Right ventricle myocardium inferior (tissue), 1 donor: ENCODE measurements at regions of chr11 and their contacts with region 1.

Region 1: GRCh38 chr11:47355283-47356128 is 3.0 kb upstream of the MYBPC3 start:
- DNase-seq: peak; percentile 95
- ATAC-seq: peak; percentile 58

Region 2: GRCh38 chr11:46889689-46890475 is 465.6 kb before region 1 on chr11:
- intact Hi-C with region 1: loop called (anchors 5 kb)
- DNase-seq: no peak
- ATAC-seq: peak; percentile 83

Region 3: DNA sequence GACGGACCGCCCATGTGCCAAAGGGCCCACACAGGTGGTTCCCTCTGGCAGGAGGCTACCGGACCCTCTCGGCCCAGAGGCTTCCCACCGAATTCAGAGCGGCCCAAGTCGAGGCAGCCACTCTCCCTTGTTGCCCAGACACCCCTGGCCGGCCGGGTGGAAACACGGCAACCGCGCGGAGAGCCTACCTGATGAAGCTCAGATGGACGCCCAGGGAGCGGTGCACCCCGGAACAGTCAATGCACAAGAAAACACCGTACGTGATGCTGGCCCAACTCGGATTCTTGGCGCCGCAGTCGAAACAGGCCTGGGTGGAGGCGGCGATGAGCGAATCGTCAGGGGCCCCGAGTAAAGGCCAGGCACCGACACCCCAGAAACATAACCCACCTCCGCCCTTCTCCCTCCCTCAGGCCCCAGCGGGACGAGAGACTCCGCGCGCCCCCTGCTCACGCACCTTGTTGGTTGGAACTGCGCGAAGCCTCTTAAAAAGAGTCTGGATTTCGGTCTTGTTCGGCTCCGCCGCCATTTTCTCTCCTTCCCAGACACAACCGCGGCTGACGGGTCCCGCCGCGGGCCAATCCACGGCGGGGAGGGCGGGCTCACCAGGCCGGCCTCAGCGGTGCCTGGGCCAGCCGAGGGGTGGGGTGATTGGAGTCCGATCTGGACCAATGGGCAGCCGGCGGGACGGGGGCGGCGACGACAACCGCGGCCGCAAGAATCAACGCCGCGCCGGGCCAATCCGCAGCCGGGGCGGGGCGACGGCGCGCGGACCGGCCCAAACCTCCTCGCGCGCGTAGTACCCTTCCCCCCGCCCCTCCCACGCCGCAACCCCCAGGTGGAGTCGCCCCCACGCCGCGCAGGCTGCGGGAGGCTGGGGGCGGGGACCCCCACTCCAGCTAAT is 178.9 kb before region 1 on chr11 and contains the start of gene ARFGAP2:
- intact Hi-C with region 1: loop called (anchors 1 kb)
- DNase-seq: peak; percentile 99
- ATAC-seq: peak; percentile 94
- total RNA-seq, gene ARFGAP2: 45.8 TPM

Region 4: GRCh38 chr11:47259178-47259977 is 96.1 kb before region 1 on chr11:
- intact Hi-C with region 1: loop called (anchors 1 kb)
- DNase-seq: no peak
- ATAC-seq: no peak

Region 5: GRCh38 chr11:47269002-47269828 is 86.3 kb before region 1 on chr11:
- intact Hi-C with region 1: loop called (anchors 1 kb)
- DNase-seq: peak; percentile 95
- ATAC-seq: peak; percentile 91

Region 6: DNA sequence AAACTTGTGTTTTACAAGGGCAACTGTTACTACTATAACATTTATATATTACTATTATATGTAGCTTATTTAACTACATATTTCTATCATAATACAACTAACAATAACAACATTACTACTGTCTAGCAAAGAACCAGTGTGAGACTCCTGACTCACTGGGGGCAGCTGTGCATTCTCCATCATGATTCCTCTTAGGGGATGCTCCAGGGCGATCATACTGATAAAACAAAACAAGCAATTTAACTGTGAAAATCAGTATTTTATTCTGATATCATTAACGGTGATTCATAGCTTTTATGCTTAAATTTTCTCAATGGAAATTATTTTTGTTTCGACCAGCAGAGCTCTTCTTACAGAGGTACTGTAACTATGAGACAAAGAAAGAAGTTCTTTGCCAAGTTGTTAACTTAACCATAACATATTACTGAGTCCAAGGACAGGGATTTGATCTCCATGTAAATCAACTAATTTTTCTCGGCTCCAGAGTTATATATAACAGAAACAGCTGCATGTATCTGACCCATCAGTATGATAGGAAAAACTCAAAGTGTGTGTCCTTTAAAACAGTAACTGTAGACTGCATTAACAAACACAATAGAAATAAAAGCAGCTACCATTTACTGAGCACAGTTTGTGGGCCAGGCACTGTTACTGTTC is 436.4 kb after region 1 on chr11:
- intact Hi-C with region 1: no loop called
- DNase-seq: no peak
- ATAC-seq: no peak